ENCODE measurements at regions of chr7 and their contacts with region 1.

Region 1: DNA sequence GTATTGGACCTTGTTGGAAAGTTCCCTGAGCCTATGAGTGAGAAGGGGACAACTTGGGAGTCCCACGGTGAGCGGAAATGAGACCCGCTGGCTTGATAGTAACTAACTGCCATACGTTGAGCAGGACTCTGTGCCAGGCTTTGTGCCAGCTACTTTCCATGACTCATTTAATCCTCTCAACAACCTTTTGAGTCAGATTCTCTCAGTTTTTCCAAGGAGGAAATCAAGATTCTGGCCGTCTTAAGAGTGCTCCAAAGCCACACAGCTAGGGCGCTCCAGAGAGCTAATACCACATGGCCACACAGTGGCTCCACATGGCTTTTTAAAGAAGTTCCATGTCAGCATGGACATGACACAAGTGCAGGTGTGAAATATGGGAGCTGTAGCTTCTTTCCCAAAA is 55.7 kb downstream of the NOD1 start:
- DNase-seq: no peak
- ATAC-seq: peak; percentile 14 to 34

Region 2: GRCh38 chr7:30164567-30164966 is 258.4 kb before region 1 on chr7:
- intact Hi-C with region 1: loop called in 1 of 2 experiments (anchors 10 kb)
- DNase-seq: no peak
- ATAC-seq: peak; percentile 60 to 74

Region 3: DNA sequence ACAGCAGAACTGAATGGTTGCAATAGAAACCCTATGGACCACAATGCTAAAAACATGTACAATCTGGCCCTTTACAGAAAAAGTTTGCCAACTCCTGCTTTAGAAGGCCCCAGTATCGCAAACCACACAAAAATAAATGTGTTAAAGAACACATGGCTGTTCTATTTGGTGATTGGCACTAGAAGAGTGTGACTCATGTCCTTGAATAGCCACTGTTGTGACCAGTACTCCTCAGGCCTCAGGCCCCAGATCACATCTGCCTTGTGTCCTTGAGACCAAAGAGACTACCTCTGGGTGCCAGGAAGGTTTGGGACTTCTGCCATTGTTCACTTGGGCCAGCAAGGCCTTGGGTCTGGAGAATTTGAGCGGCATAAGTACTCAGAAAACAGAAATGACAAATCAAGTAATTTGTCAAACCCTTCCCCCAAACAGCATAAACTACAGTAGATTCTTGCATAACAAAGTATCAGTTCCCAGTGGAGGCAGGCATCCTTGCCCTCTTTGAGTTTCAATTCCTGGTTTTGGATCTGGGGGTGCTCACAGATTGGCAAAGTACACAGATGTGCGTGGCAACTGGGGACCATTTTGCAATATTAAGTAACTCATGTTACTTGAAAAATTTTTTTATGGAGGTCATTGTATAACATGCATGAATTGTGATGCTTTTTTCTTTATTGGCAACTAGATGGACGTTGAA is 238.0 kb before region 1 on chr7:
- intact Hi-C with region 1: no loop called
- DNase-seq: no peak
- ATAC-seq: peak; percentile 86 to 91

Measured in left cardiac atrium (tissue), 4 donors.